Motor neuron (in vitro differentiated cells): ENCODE measurements at regions of chr9 and their contacts with region 1.

Region 1: DNA sequence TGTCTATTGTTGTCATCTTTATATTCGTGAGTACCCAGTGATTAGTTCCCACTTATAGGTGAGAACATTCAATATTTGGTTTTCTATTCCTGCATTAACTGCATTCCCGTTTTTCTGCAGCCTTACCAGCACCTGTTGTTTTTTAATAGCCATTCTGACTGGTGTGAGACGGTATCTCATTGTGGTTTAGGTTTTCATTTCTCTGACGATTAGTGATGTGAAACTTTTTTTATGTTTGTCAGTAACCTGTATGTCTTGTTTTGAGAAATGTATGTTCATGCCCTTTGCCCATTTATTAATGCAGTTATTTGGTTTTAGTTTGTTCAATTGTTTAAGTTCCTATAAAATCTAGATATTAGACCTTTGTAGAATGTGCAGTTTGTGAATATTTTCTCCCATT is 546.0 kb upstream of the RORB start:
- ATAC-seq: no peak
- H3K4me3 ChIP-seq: no peak overlapping the region
- H3K27ac ChIP-seq: no peak overlapping the region
- H3K4me1 ChIP-seq: no peaks in the 10 kb centered on the region

Region 2: GRCh38 chr9:73805111-73805510 is 146.0 kb before region 1 on chr9:
- in situ Hi-C with region 1: no loop called
- ATAC-seq: no peak
- H3K4me3 ChIP-seq: no peak overlapping the region
- H3K27ac ChIP-seq: no peak overlapping the region
- H3K4me1 ChIP-seq: no peaks in the 10 kb centered on the region

Region 3: DNA sequence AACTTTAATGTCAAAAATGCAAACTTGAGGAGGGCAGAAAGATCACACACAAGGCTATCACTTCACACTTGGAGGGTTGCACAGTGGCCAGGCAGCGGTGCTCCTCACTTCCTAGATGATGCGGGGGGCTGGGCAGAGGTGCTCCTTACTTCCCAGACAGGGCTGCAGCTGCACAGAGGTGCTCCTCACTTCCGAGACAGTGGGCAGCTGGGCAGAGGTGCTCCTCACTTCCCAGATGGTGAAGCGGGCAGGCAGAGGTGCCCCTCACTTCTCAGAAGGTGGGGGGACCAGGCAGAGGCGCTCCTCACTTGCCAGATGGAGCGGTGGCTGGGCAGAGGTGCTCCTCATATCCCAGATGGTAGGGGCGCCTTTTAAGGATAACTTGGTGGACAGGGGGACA is 122.8 kb after region 1 on chr9:
- in situ Hi-C with region 1: loop called in 1 of 9 experiments (anchors 25 kb)
- ATAC-seq: no peak
- H3K4me3 ChIP-seq: no peak overlapping the region
- H3K27ac ChIP-seq: no peak overlapping the region
- H3K4me1 ChIP-seq: no peaks in the 10 kb centered on the region